Activated CD4-positive, alpha-beta T cell treated with anti-CD3 and anti-CD28 coated beads for 36 hours (primary cell): ENCODE measurements at regions of chr6 and their contacts with region 1.

Region 1: GRCh38 chr6:45801471-45802289 is 214.0 kb downstream of the CLIC5 start:
- DNase-seq: peak; percentile 80
- ATAC-seq: peak; percentile 82
- H3K4me3 Mint-ChIP-seq: no peak overlapping the region
- H3K27ac Mint-ChIP-seq: peak overlapping the region; percentile 72
- H3K4me1 Mint-ChIP-seq: peaks cover 22% of the 10 kb centered on the region
- H3K27me3 Mint-ChIP-seq: peaks cover 2% of the 10 kb centered on the region

Region 2: DNA sequence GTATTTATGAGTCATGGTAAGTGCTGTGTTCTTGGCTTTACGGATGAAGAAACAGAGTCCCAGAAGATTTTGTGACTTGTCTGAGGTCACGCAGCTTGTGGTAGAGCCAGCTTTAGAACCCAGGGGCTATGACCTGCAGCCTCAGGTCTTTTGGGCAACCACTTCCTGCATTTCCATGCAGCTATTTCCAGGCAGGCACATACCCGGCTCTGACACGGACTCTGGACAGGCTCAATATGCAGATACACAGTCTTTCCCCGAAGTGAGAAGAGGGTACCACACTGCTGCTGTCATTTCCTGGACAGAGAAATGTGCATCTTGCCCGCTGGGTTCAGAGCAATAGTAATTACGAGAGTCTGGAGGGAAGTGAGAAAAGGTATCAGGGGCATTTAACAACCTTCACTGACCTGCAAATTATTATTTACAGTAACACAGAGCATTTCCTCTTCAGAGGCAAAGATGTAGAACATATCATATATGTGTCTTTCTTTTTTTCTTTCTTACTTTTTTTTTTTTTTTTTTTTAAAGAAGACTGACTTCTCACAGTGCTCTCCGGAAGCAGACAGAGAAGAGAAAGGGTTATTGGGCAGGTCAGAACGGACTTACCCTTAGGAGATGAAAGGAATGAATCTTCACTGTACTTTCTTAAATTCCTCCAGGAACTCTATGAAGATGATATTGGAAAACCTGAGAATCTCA is 28.9 kb after region 1 on chr6:
- CTCF ChIA-PET with region 1: interaction called, 3 read pairs
- POLR2A ChIA-PET with region 1: interaction called, 5 read pairs
- intact Hi-C with region 1: loop called (anchors 1 kb)
- DNase-seq: peak; percentile 79
- ATAC-seq: peak; percentile 79
- H3K4me3 Mint-ChIP-seq: peak overlapping the region; percentile 63
- H3K27ac Mint-ChIP-seq: peak overlapping the region; percentile 93
- H3K4me1 Mint-ChIP-seq: peaks cover 46% of the 10 kb centered on the region
- H3K27me3 Mint-ChIP-seq: peaks cover 4% of the 10 kb centered on the region